ENCODE measurements at regions of chr13 and their contacts with region 1.

Region 1: GRCh38 chr13:33571618-33572017 is 246.3 kb upstream of the RFC3 start:
- DNase-seq: no peak
- H3K4me3 ChIP-seq: no peak overlapping the region
- H3K27ac ChIP-seq: no peak overlapping the region
- H3K4me1 ChIP-seq: no peaks in the 10 kb centered on the region
- H3K27me3 ChIP-seq: no peaks in the 10 kb centered on the region
- CTCF ChIP-seq: no peak
- POLR2A ChIP-seq: no peak

Region 2: DNA sequence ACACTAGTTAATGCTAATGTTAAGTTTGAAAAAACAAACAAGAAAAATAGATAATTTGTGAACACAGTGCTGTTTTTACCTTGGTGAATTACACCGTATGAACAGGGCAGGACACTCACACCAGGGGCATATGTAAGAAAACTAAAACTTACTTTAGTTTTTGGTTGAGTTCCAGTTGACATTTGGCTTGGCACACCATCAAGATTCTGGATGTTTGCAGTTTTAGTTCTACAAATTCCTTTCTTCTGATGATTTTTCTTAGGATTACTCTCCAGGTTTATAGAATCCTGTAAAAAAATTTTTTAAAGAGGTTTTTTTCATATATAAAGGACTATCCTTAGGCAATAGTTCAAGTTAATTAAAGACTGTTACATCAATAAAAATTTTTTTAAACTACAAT is 47.5 kb before region 1 on chr13:
- CTCF ChIA-PET with region 1: no interaction called
- POLR2A ChIA-PET with region 1: no interaction called
- dilution Hi-C with region 1: no loop called
- intact Hi-C with region 1: no loop called
- DNase-seq: peak; percentile 65
- H3K4me3 ChIP-seq: no peak overlapping the region
- H3K27ac ChIP-seq: no peak overlapping the region
- H3K4me1 ChIP-seq: no peaks in the 10 kb centered on the region
- H3K27me3 ChIP-seq: no peaks in the 10 kb centered on the region
- CTCF ChIP-seq: no peak
- POLR2A ChIP-seq: no peak

Region 3: DNA sequence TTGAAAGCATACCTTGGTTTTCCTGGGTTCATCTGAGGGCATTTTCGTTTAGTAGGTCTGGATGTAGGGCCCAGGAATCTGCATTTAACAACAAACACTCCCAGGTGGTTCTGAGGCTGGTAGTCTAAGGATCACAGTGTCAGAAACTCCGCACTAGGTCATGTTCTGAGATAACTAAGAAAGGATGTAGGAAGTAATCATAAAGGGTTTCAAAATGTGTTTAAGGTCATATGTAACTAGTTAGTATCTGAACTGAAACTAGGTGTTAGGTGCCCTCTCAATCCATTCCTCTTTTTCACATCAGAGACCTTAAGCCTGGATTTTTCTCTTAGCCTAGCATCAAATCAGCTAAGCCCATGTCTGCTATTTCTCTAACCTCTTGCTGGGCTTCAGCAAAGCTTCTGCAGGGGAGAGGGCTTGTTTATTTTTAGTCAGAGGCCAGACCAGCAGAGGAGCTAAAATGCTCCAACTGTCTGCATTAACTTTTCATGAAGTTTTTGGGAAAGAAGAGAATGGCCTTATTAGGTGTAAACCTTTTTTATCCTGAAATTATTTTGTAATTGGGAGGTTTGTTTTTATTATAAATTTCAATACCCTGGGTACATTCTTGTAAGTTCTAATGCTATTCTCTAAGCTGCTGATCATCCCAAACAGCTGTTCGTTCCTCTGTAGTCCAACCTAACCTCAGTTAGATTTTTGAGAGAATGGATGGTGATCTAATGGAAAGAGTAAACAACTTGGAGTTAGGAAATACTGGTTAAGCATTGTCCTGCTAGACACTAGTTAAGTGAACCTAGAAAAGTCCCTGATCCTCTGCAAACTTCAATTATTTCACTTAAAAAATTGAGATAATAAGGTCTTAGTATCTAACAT is 16.5 kb before region 1 on chr13:
- CTCF ChIA-PET with region 1: interaction called, 3 read pairs
- POLR2A ChIA-PET with region 1: no interaction called
- dilution Hi-C with region 1: no loop called
- intact Hi-C with region 1: loop called (anchors 1 kb)
- DNase-seq: peak; percentile 31
- H3K4me3 ChIP-seq: peak overlapping the region in 1 of 3 experiments; percentile 32
- H3K27ac ChIP-seq: peak overlapping the region; percentile 67
- H3K4me1 ChIP-seq: peaks cover 25% of the 10 kb centered on the region
- H3K27me3 ChIP-seq: no peaks in the 10 kb centered on the region
- CTCF ChIP-seq: no peak
- POLR2A ChIP-seq: no peak

Region 4: DNA sequence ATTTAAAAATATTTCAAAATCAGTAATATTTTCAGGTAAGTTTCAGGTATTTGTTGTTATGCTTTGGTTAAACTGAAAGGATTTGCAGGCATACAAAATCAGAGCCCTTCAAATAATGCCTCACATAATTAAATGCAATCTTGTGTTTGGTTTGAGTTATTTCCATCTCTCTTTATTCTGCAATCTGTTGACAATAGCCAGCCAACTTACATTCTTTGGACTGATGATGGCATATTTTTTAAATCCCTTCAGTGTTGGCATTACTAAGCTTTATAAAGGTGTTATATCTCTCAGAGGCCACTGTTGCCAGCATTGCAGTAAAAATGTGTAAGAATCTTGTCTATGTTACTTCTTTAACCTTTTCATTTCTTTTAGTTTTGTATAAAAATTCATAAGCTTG is 10.9 kb before region 1 on chr13:
- CTCF ChIA-PET with region 1: interaction called, 3 read pairs
- POLR2A ChIA-PET with region 1: no interaction called
- dilution Hi-C with region 1: no loop called
- intact Hi-C with region 1: loop called (anchors 1 kb)
- DNase-seq: no peak
- H3K4me3 ChIP-seq: no peak overlapping the region
- H3K27ac ChIP-seq: no peak overlapping the region
- H3K4me1 ChIP-seq: peaks cover 15% of the 10 kb centered on the region
- H3K27me3 ChIP-seq: no peaks in the 10 kb centered on the region
- CTCF ChIP-seq: no peak
- POLR2A ChIP-seq: no peak